ENCODE measurements at regions of chr13 and their contacts with region 1.

Region 1: GRCh38 chr13:28718543-28719226 is at the start of gene SLC46A3:
- DNase-seq: peak; percentile 95
- H3K4me3 Mint-ChIP-seq: peak within 1 kb of the TSS; percentile 85
- H3K27ac Mint-ChIP-seq: peak within 1 kb of the TSS; percentile 82
- H3K4me1 Mint-ChIP-seq: peaks cover 32% of the 10 kb centered on the region
- H3K27me3 Mint-ChIP-seq: peaks cover 4% of the 10 kb centered on the region
- total RNA-seq, gene SLC46A3: 2.7 and 3.8 TPM in 2 replicates

Region 2: GRCh38 chr13:28679628-28680027 is 39.1 kb before region 1 on chr13:
- intact Hi-C with region 1: loop called (anchors 2 kb)
- DNase-seq: no peak
- H3K4me3 Mint-ChIP-seq: no peak overlapping the region
- H3K27ac Mint-ChIP-seq: no peak overlapping the region
- H3K4me1 Mint-ChIP-seq: no peaks in the 10 kb centered on the region
- H3K27me3 Mint-ChIP-seq: no peaks in the 10 kb centered on the region

Region 3: GRCh38 chr13:28707629-28708427 is 10.9 kb before region 1 on chr13:
- intact Hi-C with region 1: loop called (anchors 1 kb)
- DNase-seq: no peak
- H3K4me3 Mint-ChIP-seq: no peak overlapping the region
- H3K27ac Mint-ChIP-seq: peak overlapping the region; percentile 6
- H3K4me1 Mint-ChIP-seq: peaks cover 12% of the 10 kb centered on the region
- H3K27me3 Mint-ChIP-seq: no peaks in the 10 kb centered on the region

Region 4: GRCh38 chr13:28735481-28736029 is 16.9 kb after region 1 on chr13:
- intact Hi-C with region 1: no loop called
- DNase-seq: no peak
- H3K4me3 Mint-ChIP-seq: no peak overlapping the region
- H3K27ac Mint-ChIP-seq: no peak overlapping the region
- H3K4me1 Mint-ChIP-seq: peaks cover 15% of the 10 kb centered on the region
- H3K27me3 Mint-ChIP-seq: peaks cover 5% of the 10 kb centered on the region